ENCODE measurements at regions of chr5 and their contacts with region 1.

Region 1: GRCh38 chr5:140362860-140363630 is 3.1 kb downstream of the SLC4A9 start:
- DNase-seq: peak; percentile 72 to 96 (median 88)
- ATAC-seq: peak; percentile 90 to 95 (median 92)
- H3K4me3 ChIP-seq: peak overlapping the region in 2 of 4 donors; percentile 22 to 43
- H3K27ac ChIP-seq: no peak overlapping the region
- H3K4me1 ChIP-seq: no peaks in the 10 kb centered on the region
- H3K27me3 ChIP-seq: no peaks in the 10 kb centered on the region
- CTCF ChIP-seq: peak; percentile 92 to 97 (median 96)

Region 2: DNA sequence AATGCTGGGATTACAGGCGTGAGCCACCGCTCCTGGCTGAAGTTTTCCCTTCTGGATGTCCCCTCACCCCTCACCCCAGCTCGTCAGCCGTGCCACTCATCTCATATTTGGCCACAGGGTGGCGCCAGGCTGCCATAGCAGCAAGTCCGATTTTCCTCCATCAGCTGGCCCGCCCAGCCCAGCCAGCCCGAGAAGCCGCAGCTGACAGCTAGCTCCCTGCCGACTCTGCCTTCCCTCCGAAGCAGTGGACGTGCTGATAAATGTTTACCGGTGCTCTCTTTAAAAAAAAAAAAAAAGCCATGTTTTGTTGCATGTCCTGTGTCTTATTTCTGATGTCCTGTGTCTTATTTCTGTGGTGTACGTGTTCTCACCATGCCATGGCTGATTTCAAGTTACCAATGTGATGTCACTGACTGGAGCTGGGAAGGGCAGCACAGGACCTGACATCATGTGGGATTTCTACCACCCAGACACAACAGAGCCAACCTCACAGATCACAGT is 118.5 kb before region 1 on chr5:
- intact Hi-C with region 1: loop called in 1 of 3 experiments (anchors 10 kb)
- DNase-seq: peak; percentile 86 to 96 (median 92)
- ATAC-seq: peak; percentile 75 to 86 (median 80)
- H3K4me3 ChIP-seq: no peak overlapping the region
- H3K27ac ChIP-seq: no peak overlapping the region
- H3K4me1 ChIP-seq: peaks cover 24 to 38% (median 29%) of the 10 kb centered on the region in 3 donors
- H3K27me3 ChIP-seq: no peaks in the 10 kb centered on the region
- CTCF ChIP-seq: peak; percentile 76 to 81 (median 77)

Region 3: DNA sequence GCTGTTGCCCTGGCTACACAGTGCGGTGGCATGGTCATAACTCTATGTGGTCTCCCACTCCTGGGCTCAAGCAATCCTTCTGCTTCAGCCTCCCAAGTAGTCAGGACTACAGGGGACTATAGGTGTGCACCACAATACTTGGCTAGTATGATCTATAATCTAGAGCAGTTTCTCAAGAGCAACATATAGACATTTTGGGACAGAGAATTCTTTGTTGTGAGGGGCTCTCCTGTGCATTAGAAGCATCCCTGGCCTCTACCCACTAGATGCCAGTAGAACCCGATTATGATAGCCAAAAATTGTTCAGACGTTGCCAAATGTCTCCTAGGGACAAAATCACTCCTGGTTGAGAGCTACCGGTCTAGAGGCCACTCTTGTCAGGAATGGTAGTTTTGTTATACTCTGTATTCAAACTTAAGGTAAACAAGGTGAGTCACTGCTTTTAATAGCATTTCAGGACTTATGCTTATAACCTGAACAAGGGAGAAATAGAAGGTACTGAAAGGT is 45.8 kb after region 1 on chr5:
- intact Hi-C with region 1: no loop called
- DNase-seq: no peak
- ATAC-seq: peak; percentile 77 to 90 (median 82)
- H3K4me3 ChIP-seq: no peak overlapping the region
- H3K27ac ChIP-seq: peak overlapping the region in 2 of 4 donors; percentile 29 to 30
- H3K4me1 ChIP-seq: peaks cover 22 to 36% (median 22%) of the 10 kb centered on the region in 3 donors
- H3K27me3 ChIP-seq: no peaks in the 10 kb centered on the region
- CTCF ChIP-seq: no peak

Region 4: GRCh38 chr5:140639148-140639979 is 276.3 kb after region 1 on chr5 and contains the start of gene TMCO6:
- intact Hi-C with region 1: loop called in 1 of 3 experiments (anchors 10 kb)
- DNase-seq: peak; percentile 96 to 98 (median 98)
- ATAC-seq: peak; percentile 98 to 99 (median 98)
- H3K4me3 ChIP-seq: peak within 1 kb of the TSS; percentile 68 to 93 (median 76)
- H3K27ac ChIP-seq: peak within 1 kb of the TSS; percentile 60 to 79 (median 71)
- H3K4me1 ChIP-seq: peaks cover 0 to 7% (median 0%) of the 10 kb centered on the region in 3 donors
- H3K27me3 ChIP-seq: no peaks in the 10 kb centered on the region
- CTCF ChIP-seq: peak; percentile 35 to 63 (median 44)
- total RNA-seq, gene TMCO6: 5.5 to 12.3 (median 8.0) TPM

Region 5: DNA sequence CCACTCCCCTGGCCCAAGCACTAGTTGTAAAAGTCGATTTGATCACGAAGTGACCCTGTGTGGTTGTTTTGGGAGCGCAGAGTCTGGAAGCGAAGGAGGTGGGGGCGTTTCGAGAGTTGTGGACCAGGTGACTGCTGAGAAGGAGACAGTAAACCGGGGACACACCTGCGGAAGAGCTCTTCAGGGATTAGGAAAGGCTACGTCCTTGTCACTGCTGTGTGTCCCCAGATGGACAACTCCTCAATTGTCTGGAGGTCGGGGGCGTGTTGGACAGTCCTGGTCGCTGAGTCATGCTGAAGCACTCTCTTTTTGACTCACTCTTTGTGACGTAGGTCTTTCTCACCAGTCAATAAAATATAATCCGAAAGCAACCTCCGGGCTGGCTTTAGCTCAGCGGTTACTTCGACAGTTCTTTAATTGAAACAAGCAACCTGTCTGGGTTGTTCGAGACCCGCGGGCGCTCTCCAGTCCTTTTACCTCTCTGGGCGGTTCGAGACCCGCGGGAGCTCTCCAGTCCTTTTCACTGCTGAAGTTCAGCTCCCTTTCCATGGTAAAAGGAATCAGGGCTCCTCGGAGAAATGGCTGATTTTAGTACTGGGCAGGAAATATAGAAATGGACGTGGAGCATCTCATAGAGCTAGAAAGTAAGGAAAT is 348.0 kb after region 1 on chr5:
- intact Hi-C with region 1: loop called in 1 of 3 experiments (anchors 10 kb)
- DNase-seq: peak; percentile 81 to 98 (median 92)
- ATAC-seq: peak; percentile 91 to 96 (median 94)
- H3K4me3 ChIP-seq: peak overlapping the region; percentile 38 to 58 (median 50)
- H3K27ac ChIP-seq: peak overlapping the region; percentile 75 to 91 (median 86)
- H3K4me1 ChIP-seq: no peaks in the 10 kb centered on the region
- H3K27me3 ChIP-seq: no peaks in the 10 kb centered on the region
- CTCF ChIP-seq: no peak